Dorsolateral prefrontal cortex (tissue), 120 donors: ENCODE measurements at regions of chr14 and their contacts with region 1.

Region 1: DNA sequence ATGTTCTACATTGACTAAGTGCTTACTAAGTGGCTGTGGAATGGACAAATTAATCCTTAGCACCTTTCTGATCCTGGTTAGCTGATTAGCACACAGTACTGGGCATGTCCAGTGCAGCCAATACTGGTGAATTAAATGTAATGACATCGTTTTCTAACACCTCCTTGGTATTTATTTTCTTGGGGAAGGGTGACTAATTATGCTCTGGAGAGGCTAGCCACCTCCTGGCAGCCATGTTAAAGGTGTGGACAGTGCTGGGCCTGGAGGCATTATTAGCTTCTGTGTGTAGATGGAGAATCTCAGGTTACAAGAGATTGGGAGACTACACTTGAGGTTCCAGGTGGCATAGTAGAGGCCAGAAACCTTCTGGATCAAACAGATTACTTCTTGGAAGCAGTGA is 231.0 kb upstream of the DDHD1 start:
- DNase-seq: no peak
- H3K4me3 ChIP-seq: no peak overlapping the region
- H3K27ac ChIP-seq: peak overlapping the region in 49 of 59 donors; percentile 2 to 88 (median 59)
- H3K27me3 ChIP-seq: no peaks in the 10 kb centered on the region
- CTCF ChIP-seq: no peak

Region 2: GRCh38 chr14:53365486-53366130 is 18.5 kb before region 1 on chr14:
- intact Hi-C with region 1: loop called in 1 of 2 experiments (anchors 1 kb)
- DNase-seq: peak in 2 of 10 donors; percentile 40 to 43
- H3K4me3 ChIP-seq: no peak overlapping the region
- H3K27ac ChIP-seq: peak overlapping the region in 15 of 59 donors; percentile 4 to 69 (median 40)
- H3K27me3 ChIP-seq: no peaks in the 10 kb centered on the region
- CTCF ChIP-seq: no peak